ENCODE measurements at regions of chr4 and their contacts with region 1.

Region 1: GRCh38 chr4:81471588-81472288 is at the start of gene RASGEF1B:
- DNase-seq: peak; percentile 95
- H3K4me3 ChIP-seq: peak within 1 kb of the TSS; percentile 73 to 87 (median 84)
- H3K27ac ChIP-seq: peak within 1 kb of the TSS; percentile 80 to 91 (median 86)
- H3K4me1 ChIP-seq: peaks cover 14 to 54% (median 45%) of the 10 kb centered on the region in 4 donors
- H3K27me3 ChIP-seq: no peaks in the 10 kb centered on the region
- CTCF ChIP-seq: no peak
- EP300 ChIP-seq: no peak
- POLR2A ChIP-seq: peak; percentile 49
- total RNA-seq, gene RASGEF1B: 5.2 to 18.6 (median 6.2) TPM

Region 2: DNA sequence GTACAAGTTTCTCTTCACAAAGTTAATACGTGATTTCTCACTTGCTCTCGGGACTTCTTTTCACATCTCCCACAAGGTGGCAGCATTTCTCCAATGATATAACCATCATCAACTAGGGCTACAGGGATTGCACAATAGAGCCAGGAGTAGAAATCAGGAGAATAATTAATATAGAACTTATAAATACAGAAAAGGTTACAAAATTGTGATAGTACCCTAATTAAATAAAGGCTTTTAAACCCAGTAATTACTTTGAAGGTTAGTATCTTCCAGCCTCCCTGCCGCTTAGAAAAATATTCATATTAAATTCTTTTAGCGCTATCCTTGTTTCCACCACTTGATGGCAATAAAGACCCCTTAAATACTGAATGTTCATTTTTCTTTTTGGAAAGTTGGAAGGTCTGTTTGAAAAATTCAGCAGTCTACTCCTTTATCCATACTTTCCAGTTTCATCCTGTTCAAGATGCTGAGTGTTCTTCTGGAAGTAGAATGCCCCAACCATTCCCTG is 65.8 kb before region 1 on chr4:
- intact Hi-C with region 1: loop called (anchors 5 kb)
- DNase-seq: no peak
- H3K4me3 ChIP-seq: peak overlapping the region in 3 of 4 donors; percentile 10 to 19 (median 17)
- H3K27ac ChIP-seq: no peak overlapping the region
- H3K4me1 ChIP-seq: peaks cover 0 to 9% (median 4%) of the 10 kb centered on the region in 4 donors
- H3K27me3 ChIP-seq: no peaks in the 10 kb centered on the region
- CTCF ChIP-seq: peak; percentile 72 to 85 (median 81)
- EP300 ChIP-seq: no peak
- POLR2A ChIP-seq: no peak

Region 3: DNA sequence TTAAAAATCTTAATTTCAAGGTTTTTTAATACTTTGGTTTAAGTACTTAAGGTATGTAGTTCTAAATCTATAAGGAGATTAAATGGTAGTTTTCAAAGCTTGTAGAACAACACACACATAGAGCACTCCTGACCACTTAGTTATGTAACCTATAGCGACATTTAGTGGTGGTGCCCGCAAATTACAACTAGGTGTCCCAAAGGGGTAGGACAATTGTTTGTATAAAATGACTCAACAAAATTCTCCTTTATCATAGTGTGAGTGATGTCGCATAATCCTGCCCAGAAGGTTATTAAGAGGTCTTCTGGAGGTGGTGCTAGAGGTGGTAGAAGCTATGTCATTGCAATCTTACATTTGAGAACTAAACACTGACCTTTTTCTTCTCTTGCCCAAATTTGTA is 373.0 kb after region 1 on chr4:
- intact Hi-C with region 1: loop called (anchors 2 kb)
- DNase-seq: no peak
- H3K4me3 ChIP-seq: no peak overlapping the region
- H3K27ac ChIP-seq: no peak overlapping the region
- H3K4me1 ChIP-seq: peaks cover 0 to 5% (median 2%) of the 10 kb centered on the region in 4 donors
- H3K27me3 ChIP-seq: no peaks in the 10 kb centered on the region
- CTCF ChIP-seq: peak; percentile 78 to 83 (median 81)
- EP300 ChIP-seq: no peak
- POLR2A ChIP-seq: no peak

Region 4: DNA sequence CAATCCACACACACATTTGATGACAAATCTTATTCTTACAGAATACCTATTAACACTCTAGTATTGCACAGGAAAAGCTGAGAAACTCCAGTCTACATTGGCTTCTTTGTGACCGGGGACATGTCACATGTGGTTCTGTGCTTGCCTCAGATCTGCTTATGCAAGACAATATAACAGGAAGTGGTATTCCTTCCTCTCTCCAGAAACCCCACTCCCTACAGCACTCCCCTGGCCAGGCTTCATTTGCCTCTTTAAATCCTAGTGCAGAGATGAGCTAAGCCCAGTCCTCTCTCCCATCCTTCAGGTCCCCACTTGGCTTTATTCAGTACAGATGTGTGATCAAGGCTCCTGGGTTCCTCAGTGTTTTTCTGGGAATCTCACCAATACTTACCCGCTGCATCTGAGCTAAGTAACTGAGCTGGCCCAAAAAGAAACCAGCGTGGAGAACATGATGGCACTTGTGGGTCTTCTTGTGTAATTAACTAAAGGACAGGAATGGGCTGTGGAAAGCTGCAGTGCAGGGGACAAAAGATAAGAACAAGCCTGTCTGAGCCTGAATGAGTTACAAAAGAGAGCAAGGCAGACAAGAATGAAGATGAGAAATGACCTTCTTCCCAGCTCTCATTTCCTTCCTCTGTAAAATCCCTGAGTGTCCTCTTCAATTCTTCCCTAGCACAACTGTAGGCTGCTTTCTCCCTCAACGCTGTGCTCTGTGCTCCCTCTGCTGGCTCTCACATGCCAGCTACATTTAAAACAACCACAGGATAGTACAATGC is 796.5 kb after region 1 on chr4:
- intact Hi-C with region 1: loop called (anchors 2 kb)
- DNase-seq: no peak
- H3K4me3 ChIP-seq: no peak overlapping the region
- H3K27ac ChIP-seq: no peak overlapping the region
- H3K4me1 ChIP-seq: peaks cover 0 to 3% (median 0%) of the 10 kb centered on the region in 4 donors
- H3K27me3 ChIP-seq: no peaks in the 10 kb centered on the region
- CTCF ChIP-seq: peak; percentile 56 to 76 (median 63)
- EP300 ChIP-seq: no peak
- POLR2A ChIP-seq: no peak

Region 5: GRCh38 chr4:82284858-82285805 is 813.4 kb after region 1 on chr4:
- intact Hi-C with region 1: loop called (anchors 5 kb)
- DNase-seq: peak; percentile 99
- H3K4me3 ChIP-seq: peak overlapping the region; percentile 49 to 61 (median 52)
- H3K27ac ChIP-seq: peak overlapping the region; percentile 63 to 81 (median 66)
- H3K4me1 ChIP-seq: peaks cover 4 to 12% (median 10%) of the 10 kb centered on the region in 4 donors
- H3K27me3 ChIP-seq: no peaks in the 10 kb centered on the region
- CTCF ChIP-seq: peak in 2 of 3 experiments; percentile 87 to 98
- EP300 ChIP-seq: no peak
- POLR2A ChIP-seq: no peak

Region 6: DNA sequence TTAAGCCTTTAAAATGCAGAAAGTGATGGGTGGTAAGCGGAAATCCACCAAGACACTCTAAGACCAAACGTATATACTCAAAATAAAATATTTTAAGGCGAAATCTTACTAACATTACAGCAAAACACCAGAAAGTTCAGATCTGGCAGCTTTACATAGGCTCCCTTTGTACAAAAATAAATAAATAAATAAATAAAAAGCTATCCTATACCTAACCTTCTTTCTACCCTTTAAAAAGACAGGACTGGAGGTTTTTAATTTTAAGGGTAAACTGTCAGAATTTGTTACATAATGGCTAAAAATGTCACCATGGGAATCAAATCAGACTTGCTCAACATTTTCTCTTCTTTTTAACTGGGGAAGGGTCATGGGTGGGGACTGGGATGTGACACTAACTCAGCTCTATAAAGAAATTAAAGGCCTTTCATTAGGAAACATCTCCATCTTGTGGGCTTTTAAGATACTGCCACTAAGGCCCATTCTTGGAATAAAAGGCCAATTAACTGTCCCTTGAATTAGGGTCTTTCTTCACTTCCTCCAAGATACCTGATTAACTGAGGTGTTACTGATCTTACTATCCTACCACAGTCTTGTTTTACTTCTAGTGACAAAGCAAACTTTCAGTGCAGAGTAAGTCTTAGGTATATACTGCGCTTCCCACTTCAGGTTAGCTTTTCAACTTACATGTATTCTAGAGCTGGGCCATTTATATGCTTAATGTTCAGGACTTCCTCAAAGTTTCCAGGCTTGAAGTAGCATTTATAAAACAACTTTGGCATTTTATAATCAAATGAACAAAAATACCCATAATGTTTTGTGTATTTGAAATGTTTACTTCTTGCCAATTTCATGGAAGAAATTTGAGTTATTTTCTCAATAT is 888.8 kb after region 1 on chr4:
- intact Hi-C with region 1: loop called (anchors 5 kb)
- DNase-seq: no peak
- H3K4me3 ChIP-seq: no peak overlapping the region
- H3K27ac ChIP-seq: peak overlapping the region in 3 of 4 donors; percentile 31 to 73 (median 55)
- H3K4me1 ChIP-seq: peaks cover 63 to 91% (median 83%) of the 10 kb centered on the region in 4 donors
- H3K27me3 ChIP-seq: no peaks in the 10 kb centered on the region
- CTCF ChIP-seq: peak; percentile 68 to 76 (median 71)
- EP300 ChIP-seq: no peak
- POLR2A ChIP-seq: no peak